Mammary epithelial cell (primary cell): ENCODE measurements at regions of chr10 and their contacts with region 1.

Region 1: DNA sequence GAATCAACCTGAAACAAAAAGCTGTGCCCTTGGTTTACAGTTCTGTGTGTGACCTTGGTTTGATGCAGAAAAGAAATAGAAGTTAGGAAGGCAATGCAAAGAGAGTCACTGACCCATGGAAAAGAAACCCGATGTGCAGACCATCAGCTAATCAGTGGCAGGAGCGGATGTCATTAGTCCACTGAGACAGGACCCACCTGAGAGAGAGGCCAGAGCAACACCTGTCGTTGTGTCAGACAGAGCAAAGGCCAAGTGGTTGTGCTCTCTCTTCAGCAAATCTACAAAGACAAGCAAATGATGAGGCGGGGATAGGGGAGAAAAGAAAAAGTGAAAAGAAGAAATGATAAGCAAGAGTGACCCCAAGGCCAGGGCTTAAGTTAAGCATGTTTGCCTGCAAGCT is 8.7 kb downstream of the GAD2 start:
- DNase-seq: no peak
- H3K4me3 ChIP-seq: no peak overlapping the region
- H3K27ac ChIP-seq: no peak overlapping the region
- H3K4me1 ChIP-seq: no peaks in the 10 kb centered on the region
- H3K27me3 ChIP-seq: no peaks in the 10 kb centered on the region
- CTCF ChIP-seq: no peak

Region 2: DNA sequence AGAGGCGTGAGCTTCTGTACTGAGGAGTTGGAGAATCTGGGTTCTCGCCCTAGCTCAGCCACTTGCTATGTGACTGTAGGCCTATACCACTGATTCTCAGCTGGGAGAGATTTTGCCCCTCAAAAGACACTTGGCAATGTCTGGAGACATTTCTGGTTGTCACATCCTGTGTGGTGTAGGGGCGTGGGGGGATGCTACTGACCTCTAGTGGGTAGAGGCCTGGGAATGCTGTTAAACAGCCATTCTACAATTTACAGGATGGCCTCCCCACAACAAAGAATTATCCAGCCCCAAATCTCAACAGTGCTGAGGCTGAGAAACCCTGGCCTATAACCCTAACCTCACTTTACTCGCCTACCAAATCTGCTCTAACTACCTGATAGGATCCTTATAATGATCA is 67.6 kb before region 1 on chr10:
- CTCF ChIA-PET with region 1: no interaction called
- dilution Hi-C with region 1: loop called (anchors 5 kb)
- in situ Hi-C with region 1: no loop called
- intact Hi-C with region 1: no loop called
- DNase-seq: no peak
- H3K4me3 ChIP-seq: no peak overlapping the region
- H3K27ac ChIP-seq: no peak overlapping the region
- H3K4me1 ChIP-seq: no peaks in the 10 kb centered on the region
- H3K27me3 ChIP-seq: no peaks in the 10 kb centered on the region
- CTCF ChIP-seq: no peak